ENCODE measurements at regions of chr5 and their contacts with region 1.

Region 1: GRCh38 chr5:175867587-175868347 is 3.6 kb upstream of the CPLX2 start:
- DNase-seq: peak in 1 of 2 experiments; percentile 65
- H3K4me3 ChIP-seq: no peak overlapping the region
- H3K27ac ChIP-seq: no peak overlapping the region
- H3K4me1 ChIP-seq: peaks cover 9 to 13% (median 11%) of the 10 kb centered on the region in 4 experiments; a peak in 6 of 7 replicates
- H3K27me3 ChIP-seq: peaks cover 0 to 13% (median 3%) of the 10 kb centered on the region in 4 experiments; a peak in 3 of 7 replicates
- CTCF ChIP-seq: peak; percentile 71 to 86 (median 78)
- EP300 ChIP-seq: no peak
- POLR2A ChIP-seq: no peak
- RAD21 ChIP-seq: peak; percentile 82 to 87

Region 2: GRCh38 chr5:175741556-175741955 is 126.2 kb before region 1 on chr5:
- CTCF ChIA-PET with region 1: interaction called, 10 read pairs
- POLR2A ChIA-PET with region 1: no interaction called
- DNase-seq: no peak
- H3K4me3 ChIP-seq: no peak overlapping the region
- H3K27ac ChIP-seq: no peak overlapping the region
- H3K4me1 ChIP-seq: no peaks in the 10 kb centered on the region
- H3K27me3 ChIP-seq: 0 out of 7 replicates have a peak, but pooled peaks cover 0 to 5% (median under 1%) of the 10 kb centered on the region in 4 experiments
- CTCF ChIP-seq: no peak
- EP300 ChIP-seq: no peak
- POLR2A ChIP-seq: no peak
- RAD21 ChIP-seq: no peak

Region 3: GRCh38 chr5:175765858-175766257 is 101.9 kb before region 1 on chr5:
- CTCF ChIA-PET with region 1: no interaction called
- POLR2A ChIA-PET with region 1: no interaction called
- DNase-seq: no peak
- H3K4me3 ChIP-seq: no peak overlapping the region
- H3K27ac ChIP-seq: no peak overlapping the region
- H3K4me1 ChIP-seq: no peaks in the 10 kb centered on the region
- H3K27me3 ChIP-seq: no peaks in the 10 kb centered on the region
- CTCF ChIP-seq: no peak
- EP300 ChIP-seq: no peak
- POLR2A ChIP-seq: no peak
- RAD21 ChIP-seq: no peak

Region 4: DNA sequence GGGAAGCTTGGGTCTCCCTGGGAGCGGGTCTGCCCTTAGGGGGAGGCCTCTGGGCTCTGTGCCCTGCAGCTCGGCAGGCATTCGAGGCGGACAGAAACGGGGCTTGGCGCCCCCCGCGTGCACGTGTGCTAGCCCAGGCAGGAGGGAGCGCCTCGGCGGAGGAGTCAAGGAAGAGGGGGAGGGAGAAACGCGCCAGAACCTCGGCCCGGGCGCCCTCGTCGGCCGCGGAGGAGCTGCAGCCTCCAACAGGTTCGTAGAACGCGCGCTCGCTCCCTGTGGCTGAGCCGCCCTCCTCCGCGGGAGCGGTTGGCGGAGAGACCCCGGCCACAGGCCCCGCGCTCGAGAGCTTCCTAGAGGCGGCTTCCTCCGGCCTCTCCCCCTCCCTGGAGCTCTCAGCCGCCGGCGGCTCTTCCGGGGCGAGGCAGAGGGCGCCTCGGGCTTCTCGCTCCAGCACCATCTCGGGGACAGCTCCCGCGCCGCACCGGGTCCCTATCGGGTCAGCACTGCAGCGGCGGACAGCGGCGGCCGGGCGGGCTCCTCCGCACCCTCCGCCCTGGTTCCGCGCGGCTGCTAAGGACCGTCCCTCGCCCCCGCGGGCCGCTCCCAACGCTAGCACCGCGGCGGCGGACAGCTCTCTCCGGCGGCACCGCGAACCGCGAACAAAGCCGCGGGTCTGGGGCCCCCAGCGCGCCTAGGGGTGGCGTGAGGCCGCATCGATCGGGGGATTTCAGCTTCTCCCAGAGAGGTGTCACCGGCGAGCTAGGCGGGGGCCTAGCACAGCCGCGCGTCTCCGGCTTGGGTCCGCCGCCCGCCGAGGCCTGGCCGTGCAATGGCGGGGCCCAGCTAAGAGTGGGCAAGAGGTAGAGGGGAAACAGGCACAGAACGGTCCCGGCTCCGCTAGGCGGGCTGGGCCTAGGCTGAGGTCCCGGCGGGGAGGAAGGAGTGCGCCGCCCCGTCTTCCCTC is 70.9 kb before region 1 on chr5:
- CTCF ChIA-PET with region 1: interaction called, 57 read pairs
- POLR2A ChIA-PET with region 1: interaction called, 4 read pairs
- DNase-seq: peak; percentile 56 to 95
- H3K4me3 ChIP-seq: peak overlapping the region; percentile 24 to 78 (median 60)
- H3K27ac ChIP-seq: no peak overlapping the region
- H3K4me1 ChIP-seq: peaks cover 2 to 12% (median 9%) of the 10 kb centered on the region in 4 experiments; a peak in 5 of 7 replicates
- H3K27me3 ChIP-seq: peaks cover 4 to 12% (median 8%) of the 10 kb centered on the region in 4 experiments; a peak in 6 of 7 replicates
- CTCF ChIP-seq: no peak
- EP300 ChIP-seq: peak in 1 of 2 experiments; percentile 91; a peak in 2 of 3 replicates
- POLR2A ChIP-seq: no peak
- RAD21 ChIP-seq: peak in 1 of 2 experiments; percentile 20; a peak in 1 of 4 replicates

Region 5: GRCh38 chr5:175847503-175847902 is 20.3 kb before region 1 on chr5:
- CTCF ChIA-PET with region 1: interaction called, 22 read pairs
- POLR2A ChIA-PET with region 1: no interaction called
- DNase-seq: no peak
- H3K4me3 ChIP-seq: no peak overlapping the region
- H3K27ac ChIP-seq: no peak overlapping the region
- H3K4me1 ChIP-seq: peaks cover 0 to 21% (median 14%) of the 10 kb centered on the region in 4 experiments; a peak in 6 of 7 replicates
- H3K27me3 ChIP-seq: no peaks in the 10 kb centered on the region
- CTCF ChIP-seq: peak in 2 of 3 experiments; percentile 83; a peak in 3 of 4 replicates
- EP300 ChIP-seq: no peak
- POLR2A ChIP-seq: no peak
- RAD21 ChIP-seq: peak; percentile 59 to 74

Region 6: GRCh38 chr5:175853573-175854230 is 14.1 kb before region 1 on chr5:
- CTCF ChIA-PET with region 1: interaction called, 33 read pairs
- POLR2A ChIA-PET with region 1: interaction called, 8 read pairs
- DNase-seq: no peak
- H3K4me3 ChIP-seq: no peak overlapping the region
- H3K27ac ChIP-seq: no peak overlapping the region
- H3K4me1 ChIP-seq: peaks cover 0 to 6% (median 1%) of the 10 kb centered on the region in 4 experiments; a peak in 4 of 7 replicates
- H3K27me3 ChIP-seq: no peaks in the 10 kb centered on the region
- CTCF ChIP-seq: no peak
- EP300 ChIP-seq: no peak
- POLR2A ChIP-seq: no peak
- RAD21 ChIP-seq: no peak

Region 7: DNA sequence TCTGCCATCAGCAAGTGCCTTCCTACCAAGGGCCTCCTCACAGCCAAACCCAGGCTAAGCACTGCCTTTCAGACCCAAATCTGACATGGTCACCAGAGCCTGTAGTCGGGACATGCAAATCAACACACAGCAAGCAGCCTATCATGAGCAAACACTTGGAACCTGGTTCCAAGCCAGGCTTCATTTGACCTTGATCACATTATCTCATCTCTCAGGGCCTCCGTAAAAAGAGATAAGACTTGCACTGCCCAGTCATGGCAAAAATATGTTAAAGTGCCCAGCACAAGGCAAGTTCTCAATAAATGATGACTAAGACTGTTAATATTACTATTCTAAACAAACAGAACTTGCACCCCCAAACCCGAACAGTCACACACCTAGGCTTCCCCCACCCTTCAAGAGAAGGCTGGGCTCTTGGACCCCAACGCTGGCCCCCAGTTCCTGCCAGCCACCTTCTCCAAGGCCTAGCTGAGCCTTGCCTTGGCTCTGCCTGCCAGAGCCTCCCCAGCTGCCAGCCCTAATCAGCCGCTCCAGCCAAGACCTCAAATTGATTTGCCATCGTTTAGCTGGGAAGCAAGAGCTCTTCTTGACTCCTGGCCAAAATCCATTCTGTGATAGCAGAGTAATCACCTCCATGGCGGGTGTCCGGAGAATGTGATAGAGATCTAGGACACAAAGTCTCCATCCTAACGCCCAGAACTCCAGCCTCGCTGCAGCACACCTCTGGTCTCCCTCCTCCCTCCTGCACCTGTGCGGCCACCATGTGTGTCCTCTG is 22.3 kb after region 1 on chr5:
- CTCF ChIA-PET with region 1: interaction called, 71 read pairs
- POLR2A ChIA-PET with region 1: interaction called, 3 read pairs
- DNase-seq: no peak
- H3K4me3 ChIP-seq: no peak overlapping the region
- H3K27ac ChIP-seq: no peak overlapping the region
- H3K4me1 ChIP-seq: peaks cover 0 to 6% (median 3%) of the 10 kb centered on the region in 4 experiments; a peak in 5 of 7 replicates
- H3K27me3 ChIP-seq: no peaks in the 10 kb centered on the region
- CTCF ChIP-seq: no peak
- EP300 ChIP-seq: no peak
- POLR2A ChIP-seq: no peak
- RAD21 ChIP-seq: no peak

Measured in H1 (cell line).